Activated CD4-positive, alpha-beta T cell treated with anti-CD3 and anti-CD28 coated beads, Interleukin-2, amount 10 ng/mL, durations not matched to agents 24 days and 14 days (primary cell): ENCODE measurements at regions of chr14 and their contacts with region 1.

Region 1: GRCh38 chr14:51846631-51847488 is 13.6 kb upstream of the GNG2 start:
- DNase-seq: peak; percentile 97
- H3K4me3 Mint-ChIP-seq: peak overlapping the region; percentile 89
- H3K27ac Mint-ChIP-seq: peak overlapping the region; percentile 99
- H3K4me1 Mint-ChIP-seq: peaks cover 65% of the 10 kb centered on the region
- H3K27me3 Mint-ChIP-seq: peaks cover 2% of the 10 kb centered on the region

Region 2: DNA sequence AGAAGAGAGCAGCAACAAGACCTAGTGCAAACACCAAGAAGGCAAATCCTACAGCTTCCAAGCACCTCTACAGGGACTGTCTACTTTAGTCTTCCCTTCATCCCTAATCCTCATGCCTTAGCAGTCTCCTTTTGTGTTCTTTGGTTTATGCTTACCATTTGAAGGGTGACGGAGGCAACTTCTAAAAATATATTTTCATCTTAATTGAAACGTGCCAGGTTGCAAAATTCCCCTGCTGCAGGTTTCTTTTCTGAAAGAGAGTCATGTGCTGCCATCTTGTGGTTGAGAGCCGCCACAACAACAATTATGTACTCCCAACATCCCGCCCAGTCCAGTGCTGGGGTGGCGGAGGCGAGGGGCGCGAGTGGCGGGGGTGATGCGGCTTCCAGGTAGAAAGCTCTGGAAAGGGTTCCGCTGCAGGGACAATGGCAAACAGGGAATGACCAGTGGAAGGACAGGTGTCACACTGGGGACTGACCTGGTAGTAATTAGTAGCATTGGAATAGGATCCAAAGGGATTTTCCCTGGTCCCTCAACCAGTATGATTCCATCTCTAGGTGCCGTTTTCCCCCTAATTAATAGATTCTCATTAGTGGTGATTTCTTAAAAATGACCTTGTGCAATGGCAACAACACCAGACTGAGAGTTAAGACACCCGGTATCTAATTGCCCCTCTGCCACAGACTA is 66.7 kb before region 1 on chr14:
- intact Hi-C with region 1: loop called (anchors 2 kb)
- DNase-seq: peak; percentile 91
- H3K4me3 Mint-ChIP-seq: peak overlapping the region; percentile 30
- H3K27ac Mint-ChIP-seq: no peak overlapping the region
- H3K4me1 Mint-ChIP-seq: peaks cover 12% of the 10 kb centered on the region
- H3K27me3 Mint-ChIP-seq: peaks cover 40% of the 10 kb centered on the region

Region 3: DNA sequence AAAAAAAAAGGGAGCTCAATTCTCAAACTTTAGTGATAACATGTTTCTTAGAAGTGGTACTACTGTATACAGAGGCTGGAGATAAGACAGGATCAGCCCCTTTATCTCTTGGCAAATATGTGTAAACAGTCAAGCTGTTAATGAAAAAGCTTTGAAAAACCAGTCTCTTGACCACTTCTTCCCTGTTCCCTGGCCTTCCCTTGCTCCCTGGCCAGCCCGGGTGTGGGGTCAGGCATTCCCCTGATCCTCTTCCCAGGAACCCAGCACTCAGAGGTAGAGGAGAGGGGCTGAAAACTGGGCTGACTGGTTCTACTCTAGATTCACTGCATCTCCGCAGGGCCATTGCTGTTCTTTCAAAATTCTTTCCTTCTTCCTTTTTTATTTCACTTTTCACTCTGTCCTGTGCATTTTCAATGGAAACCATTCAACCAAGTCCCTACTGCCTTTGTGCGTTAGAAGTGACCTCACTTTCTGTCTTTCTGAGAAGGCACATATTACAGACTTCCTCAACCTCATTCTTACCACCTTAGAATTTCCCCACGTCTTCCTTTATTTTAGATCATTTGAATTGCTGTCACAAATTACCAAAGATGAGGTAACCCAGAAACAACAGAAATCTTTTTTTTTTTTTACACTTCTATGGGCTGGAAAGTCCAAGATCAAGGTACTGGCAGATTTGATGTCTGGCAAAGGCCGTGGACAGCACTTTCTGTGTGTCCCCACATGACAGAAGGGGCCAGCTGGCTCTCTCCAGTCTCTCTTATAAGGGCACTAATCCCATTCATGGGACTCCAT is 19.3 kb after region 1 on chr14:
- intact Hi-C with region 1: loop called (anchors 1 kb)
- DNase-seq: peak; percentile 78
- H3K4me3 Mint-ChIP-seq: no peak overlapping the region
- H3K27ac Mint-ChIP-seq: no peak overlapping the region
- H3K4me1 Mint-ChIP-seq: peaks cover 42% of the 10 kb centered on the region
- H3K27me3 Mint-ChIP-seq: no peaks in the 10 kb centered on the region

Region 4: DNA sequence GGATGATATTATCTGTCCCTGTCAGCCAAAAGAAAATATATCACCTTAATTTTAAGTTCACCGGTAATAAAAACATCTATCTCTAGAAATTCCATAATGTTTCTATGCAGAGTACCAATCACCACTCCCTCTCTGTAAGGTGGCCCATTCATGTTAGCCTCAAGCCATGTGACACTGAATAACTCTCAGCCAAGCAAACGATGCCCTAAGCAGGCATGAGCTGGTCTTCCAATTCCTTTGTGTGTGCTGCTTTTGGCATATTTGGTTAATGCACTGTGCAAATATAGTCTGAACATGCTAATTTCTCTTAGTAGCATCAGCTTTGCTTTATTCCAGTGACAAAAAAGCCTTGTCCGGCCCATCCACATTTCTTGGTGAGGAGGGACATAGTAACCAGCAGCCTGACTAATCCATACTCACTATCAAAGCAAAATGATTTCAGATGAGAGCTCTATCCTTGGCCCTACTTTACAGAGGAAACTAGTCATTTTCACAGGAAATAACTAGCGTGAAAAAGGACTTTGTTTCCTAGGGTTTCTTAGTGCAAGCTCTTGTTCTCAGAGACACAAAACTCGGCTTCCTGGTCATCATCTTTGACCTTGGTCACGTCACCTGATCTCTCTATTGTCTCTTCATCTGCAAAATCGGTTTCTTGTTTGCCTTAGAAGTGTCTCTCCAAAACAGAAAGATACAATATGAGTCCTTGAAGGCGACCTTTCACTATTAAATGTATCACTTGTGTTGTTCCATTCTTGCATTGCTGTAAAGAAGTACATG is 83.2 kb after region 1 on chr14:
- intact Hi-C with region 1: loop called (anchors 2 kb)
- DNase-seq: no peak
- H3K4me3 Mint-ChIP-seq: no peak overlapping the region
- H3K27ac Mint-ChIP-seq: peak overlapping the region; percentile 89
- H3K4me1 Mint-ChIP-seq: peaks cover 41% of the 10 kb centered on the region
- H3K27me3 Mint-ChIP-seq: no peaks in the 10 kb centered on the region

Region 5: DNA sequence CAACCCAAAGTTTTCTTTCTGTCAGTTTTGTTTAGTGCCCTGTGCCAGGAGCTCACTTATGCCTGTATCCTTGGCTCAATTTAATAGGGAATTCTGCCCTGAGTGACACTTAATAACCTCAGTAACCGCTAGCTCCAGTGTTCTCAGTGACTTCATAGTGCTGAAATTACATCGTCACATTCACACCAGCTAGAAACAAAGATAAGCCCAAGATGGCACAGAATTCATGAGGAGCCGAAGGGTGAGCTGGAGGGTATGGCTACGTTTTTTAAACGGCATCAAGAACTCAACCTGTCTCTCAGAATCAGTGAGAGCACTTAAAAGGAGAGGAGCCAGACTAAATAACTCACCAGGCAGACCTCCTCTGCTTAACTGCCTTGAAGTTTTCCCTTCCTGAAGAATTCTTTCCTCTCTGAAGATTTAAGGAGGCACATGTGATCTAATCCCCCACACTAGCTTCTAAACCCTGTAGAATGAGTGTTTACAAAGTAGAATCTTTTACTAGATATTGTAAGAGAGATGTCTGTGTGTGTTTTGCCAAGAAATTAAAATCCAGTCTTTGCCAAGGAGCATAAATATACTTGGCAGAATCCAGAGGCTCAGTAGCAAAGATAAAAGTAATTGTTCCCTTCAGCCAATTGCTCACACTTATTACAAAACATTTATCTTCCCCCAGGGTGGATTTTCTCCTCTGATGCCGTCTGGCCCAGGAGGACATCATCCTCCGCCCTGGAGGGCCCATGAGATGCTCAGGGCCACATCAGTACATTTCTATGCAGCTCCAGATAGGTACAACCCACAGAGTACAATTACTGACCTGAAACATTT is 504.6 kb after region 1 on chr14:
- intact Hi-C with region 1: loop called (anchors 1 kb)
- DNase-seq: peak; percentile 82
- H3K4me3 Mint-ChIP-seq: peak overlapping the region; percentile 81
- H3K27ac Mint-ChIP-seq: peak overlapping the region; percentile 99
- H3K4me1 Mint-ChIP-seq: peaks cover 64% of the 10 kb centered on the region
- H3K27me3 Mint-ChIP-seq: no peaks in the 10 kb centered on the region